ENCODE measurements at regions of chr12 and their contacts with region 1.

Region 1: DNA sequence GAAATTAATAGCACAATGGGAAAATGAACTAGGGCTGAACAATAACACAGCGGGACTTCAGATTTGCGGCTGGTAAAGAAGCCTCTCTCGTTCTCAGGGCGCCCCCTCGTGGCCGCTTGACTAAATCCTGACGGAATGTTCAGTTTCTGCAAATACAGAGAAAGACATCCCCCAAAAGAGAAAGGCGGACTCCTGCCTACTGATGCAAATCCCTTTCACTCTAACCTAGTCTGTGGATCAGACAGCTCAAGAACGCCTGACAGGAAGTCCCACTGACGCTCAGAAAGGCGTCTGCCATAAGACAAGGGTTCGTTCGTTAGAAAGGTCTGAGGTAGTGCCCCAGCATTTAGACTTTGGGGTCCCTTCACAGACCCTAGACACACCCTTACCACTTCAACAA is 2.5 kb downstream of the NUAK1 start:
- DNase-seq: peak; percentile 91

Region 2: GRCh38 chr12:105705765-105706164 is 430.5 kb before region 1 on chr12:
- intact Hi-C with region 1: loop called (anchors 2 kb)
- DNase-seq: no peak

Region 3: GRCh38 chr12:105948331-105948730 is 187.9 kb before region 1 on chr12:
- intact Hi-C with region 1: loop called (anchors 5 kb)
- DNase-seq: no peak

Region 4: DNA sequence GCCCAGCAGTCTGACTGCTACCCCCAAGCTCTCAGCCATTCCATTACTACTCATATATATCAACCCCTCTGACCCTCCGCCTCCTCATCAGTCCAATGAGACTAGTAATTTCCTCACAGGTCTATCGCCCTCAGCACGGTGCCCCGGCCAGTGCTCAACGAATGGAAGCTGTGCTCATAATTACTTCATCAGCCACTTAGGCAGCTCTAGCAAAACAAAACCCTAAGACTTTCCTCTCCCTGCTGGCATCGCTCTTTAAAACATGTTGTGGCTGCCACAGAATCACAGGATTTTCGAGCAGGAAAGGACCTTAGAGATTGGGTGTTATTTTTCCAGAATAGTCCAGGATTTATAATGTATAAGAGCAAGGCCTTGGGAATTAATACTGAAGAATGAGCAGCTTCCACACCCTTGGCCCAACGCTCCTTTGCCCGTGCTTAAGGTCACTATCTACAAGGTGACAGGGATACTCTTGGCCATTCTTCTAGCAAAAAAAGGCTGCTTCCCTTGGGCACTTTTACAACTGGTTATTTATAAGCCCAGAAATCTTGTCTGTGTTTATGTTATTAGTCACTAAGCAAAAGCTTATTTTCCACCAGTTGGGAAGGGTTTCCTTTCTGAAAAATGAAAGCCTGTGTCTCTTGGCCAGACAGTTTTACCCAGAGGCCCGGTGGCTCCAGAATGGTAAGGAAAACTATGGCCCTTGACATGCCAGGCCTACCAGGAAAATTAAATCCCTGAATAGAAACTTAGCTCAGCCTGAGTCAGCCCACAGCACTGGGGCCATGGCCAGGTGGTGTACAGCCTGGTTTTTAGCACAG is 45.5 kb before region 1 on chr12:
- intact Hi-C with region 1: loop called (anchors 2 kb)
- DNase-seq: peak; percentile 85

Region 5: GRCh38 chr12:106302401-106303201 is 166.3 kb after region 1 on chr12 and contains the start of gene TCP11L2:
- intact Hi-C with region 1: loop called (anchors 10 kb)
- DNase-seq: peak; percentile 96
- total RNA-seq, gene TCP11L2: 61.2 TPM